A549 (cell line): ENCODE measurements at regions of chr5 and their contacts with region 1.

Region 1: GRCh38 chr5:95846554-95847260 is 24.2 kb upstream of the GLRX start:
- DNase-seq: peak; percentile 76 to 89
- ATAC-seq: peak; percentile 88 to 92
- H3K4me3 ChIP-seq: no peak overlapping the region
- H3K27ac ChIP-seq: peak overlapping the region; percentile 58 to 70
- H3K4me1 ChIP-seq: peaks cover 33% of the 10 kb centered on the region
- CTCF ChIP-seq: peak; percentile 98
- EP300 ChIP-seq: no peak
- POLR2A ChIP-seq: no peak
- RAD21 ChIP-seq: peak; percentile 97 to 98

Region 2: GRCh38 chr5:95646554-95647431 is 199.9 kb before region 1 on chr5 and contains the start of gene RFESD:
- CTCF ChIA-PET with region 1: interaction called, 104 read pairs
- POLR2A ChIA-PET with region 1: interaction called, 3 read pairs
- DNase-seq: peak; percentile 83 to 99
- ATAC-seq: peak; percentile 98
- H3K4me3 ChIP-seq: peak within 1 kb of the TSS; percentile 47
- H3K27ac ChIP-seq: peak within 1 kb of the TSS; percentile 85 to 87
- H3K4me1 ChIP-seq: peaks cover 14% of the 10 kb centered on the region
- CTCF ChIP-seq: no peak; the same call in 2 of the 3 replicates
- EP300 ChIP-seq: no peak
- POLR2A ChIP-seq: peak; percentile 73
- RAD21 ChIP-seq: peak in 1 of 2 experiments; percentile 32; a peak in 1 of 5 replicates
- polyA plus RNA-seq, gene RFESD: 4.8 and 5.4 TPM in 2 replicates

Region 3: DNA sequence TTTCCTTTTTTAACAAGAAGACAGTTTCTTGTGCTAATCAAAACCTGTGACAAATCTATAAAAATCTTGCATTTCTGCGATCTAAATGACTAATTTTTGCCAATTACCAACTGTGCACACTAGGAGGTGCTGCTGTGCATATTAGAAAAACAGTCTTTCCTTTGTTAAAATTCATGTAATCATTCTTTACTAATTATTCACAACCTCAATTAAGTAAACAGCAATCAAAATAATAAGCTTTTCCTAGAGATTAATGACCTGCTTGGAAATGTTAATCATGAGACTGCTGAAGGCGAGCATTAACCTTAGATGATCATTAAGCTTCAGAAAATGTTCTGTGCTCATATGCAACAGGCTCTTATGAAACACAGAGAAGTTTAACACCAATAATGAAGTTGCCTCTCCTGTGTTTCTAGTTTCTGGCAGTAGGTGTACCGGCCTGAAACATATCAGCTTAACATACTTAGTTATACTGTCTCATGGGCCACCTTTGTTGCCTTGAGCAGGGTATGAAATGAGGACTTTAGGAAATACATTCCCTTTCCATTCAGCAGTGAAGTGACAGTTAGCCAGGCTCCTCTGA is 182.4 kb before region 1 on chr5:
- CTCF ChIA-PET with region 1: interaction called, 16 read pairs
- POLR2A ChIA-PET with region 1: no interaction called
- DNase-seq: no peak
- ATAC-seq: no peak
- H3K4me3 ChIP-seq: no peak overlapping the region
- H3K27ac ChIP-seq: peak overlapping the region in 1 of 2 experiments; percentile 18; a peak in 1 of 6 replicates
- H3K4me1 ChIP-seq: peaks cover 3% of the 10 kb centered on the region; the same call in 1 of the 3 replicates
- CTCF ChIP-seq: peak; percentile 88
- EP300 ChIP-seq: no peak
- POLR2A ChIP-seq: no peak
- RAD21 ChIP-seq: peak; percentile 70 to 76

Region 4: GRCh38 chr5:95773335-95774059 is 73.2 kb before region 1 on chr5:
- CTCF ChIA-PET with region 1: interaction called, 469 read pairs
- POLR2A ChIA-PET with region 1: no interaction called
- DNase-seq: peak in 1 of 2 experiments; percentile 20
- ATAC-seq: no peak; a peak in 1 of 6 replicates
- H3K4me3 ChIP-seq: no peak overlapping the region
- H3K27ac ChIP-seq: peak overlapping the region; percentile 61 to 75
- H3K4me1 ChIP-seq: peaks cover 14% of the 10 kb centered on the region
- CTCF ChIP-seq: no peak
- EP300 ChIP-seq: no peak
- POLR2A ChIP-seq: no peak
- RAD21 ChIP-seq: no peak

Region 5: DNA sequence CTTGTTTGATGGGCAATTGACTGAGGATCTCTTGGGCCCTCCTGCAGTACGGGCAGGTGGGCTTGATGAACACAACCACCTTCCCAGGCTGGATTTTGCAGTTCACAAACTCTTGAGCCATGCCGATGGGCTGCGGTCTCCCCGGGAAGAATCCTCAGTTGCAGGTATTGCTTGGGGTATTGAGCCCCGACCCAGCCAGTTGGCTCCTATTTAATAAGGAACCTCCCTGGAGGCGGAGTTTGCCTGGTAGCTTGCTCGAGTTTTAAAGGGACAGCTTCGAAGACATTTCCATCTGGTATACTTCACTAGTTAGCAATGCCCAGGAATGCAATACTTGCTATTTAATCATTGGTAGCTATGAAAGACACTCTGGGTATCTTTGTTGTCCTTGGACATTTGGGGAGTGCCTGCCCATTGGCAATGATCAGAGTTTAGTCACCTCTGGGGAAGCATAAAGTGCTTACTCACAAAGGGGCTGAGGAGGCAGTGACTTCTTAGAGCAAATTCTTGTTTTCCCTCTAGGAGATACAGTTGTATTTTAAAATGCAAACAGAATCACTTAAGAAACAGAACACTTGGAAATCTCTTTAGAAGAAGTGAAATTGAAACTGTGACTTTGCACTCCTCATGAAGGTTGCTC is 24.0 kb before region 1 on chr5 and contains the start of gene GLRX:
- CTCF ChIA-PET with region 1: interaction called, 59 read pairs
- POLR2A ChIA-PET with region 1: interaction called, 5 read pairs
- DNase-seq: peak; percentile 81 to 88
- ATAC-seq: peak; percentile 77 to 87
- H3K4me3 ChIP-seq: peak within 1 kb of the TSS; percentile 89
- H3K27ac ChIP-seq: peak within 1 kb of the TSS; percentile 87 to 94
- H3K4me1 ChIP-seq: peaks cover 55% of the 10 kb centered on the region
- CTCF ChIP-seq: no peak
- EP300 ChIP-seq: no peak
- POLR2A ChIP-seq: peak; percentile 78
- RAD21 ChIP-seq: no peak; a peak in 1 of 5 replicates
- polyA plus RNA-seq, gene GLRX: 329 and 381 TPM in 2 replicates

Region 6: GRCh38 chr5:95835682-95836385 is 10.9 kb before region 1 on chr5:
- CTCF ChIA-PET with region 1: interaction called, 16 read pairs
- POLR2A ChIA-PET with region 1: interaction called, 6 read pairs
- DNase-seq: no peak
- ATAC-seq: no peak
- H3K4me3 ChIP-seq: peak overlapping the region; percentile 49
- H3K27ac ChIP-seq: peak overlapping the region; percentile 97 to 100
- H3K4me1 ChIP-seq: peaks cover 39% of the 10 kb centered on the region
- CTCF ChIP-seq: no peak
- EP300 ChIP-seq: no peak
- POLR2A ChIP-seq: no peak
- RAD21 ChIP-seq: no peak

Region 7: GRCh38 chr5:95858661-95859326 is 12.1 kb after region 1 on chr5:
- CTCF ChIA-PET with region 1: interaction called, 10 read pairs
- POLR2A ChIA-PET with region 1: no interaction called
- DNase-seq: peak; percentile 94 to 95
- ATAC-seq: peak; percentile 93 to 94
- H3K4me3 ChIP-seq: peak overlapping the region; percentile 16
- H3K27ac ChIP-seq: peak overlapping the region; percentile 74 to 82
- H3K4me1 ChIP-seq: peaks cover 57% of the 10 kb centered on the region
- CTCF ChIP-seq: peak; percentile 95
- EP300 ChIP-seq: peak; percentile 85 to 86; a peak in 4 of 5 replicates
- POLR2A ChIP-seq: no peak
- RAD21 ChIP-seq: peak; percentile 95 to 99